Right ventricle myocardium inferior (tissue), 1 donor: ENCODE measurements at regions of chr4 and their contacts with region 1.

Region 1: GRCh38 chr4:16573744-16574143 is 324.7 kb downstream of the LDB2 start:
- DNase-seq: no peak
- ATAC-seq: peak; percentile 92

Region 2: DNA sequence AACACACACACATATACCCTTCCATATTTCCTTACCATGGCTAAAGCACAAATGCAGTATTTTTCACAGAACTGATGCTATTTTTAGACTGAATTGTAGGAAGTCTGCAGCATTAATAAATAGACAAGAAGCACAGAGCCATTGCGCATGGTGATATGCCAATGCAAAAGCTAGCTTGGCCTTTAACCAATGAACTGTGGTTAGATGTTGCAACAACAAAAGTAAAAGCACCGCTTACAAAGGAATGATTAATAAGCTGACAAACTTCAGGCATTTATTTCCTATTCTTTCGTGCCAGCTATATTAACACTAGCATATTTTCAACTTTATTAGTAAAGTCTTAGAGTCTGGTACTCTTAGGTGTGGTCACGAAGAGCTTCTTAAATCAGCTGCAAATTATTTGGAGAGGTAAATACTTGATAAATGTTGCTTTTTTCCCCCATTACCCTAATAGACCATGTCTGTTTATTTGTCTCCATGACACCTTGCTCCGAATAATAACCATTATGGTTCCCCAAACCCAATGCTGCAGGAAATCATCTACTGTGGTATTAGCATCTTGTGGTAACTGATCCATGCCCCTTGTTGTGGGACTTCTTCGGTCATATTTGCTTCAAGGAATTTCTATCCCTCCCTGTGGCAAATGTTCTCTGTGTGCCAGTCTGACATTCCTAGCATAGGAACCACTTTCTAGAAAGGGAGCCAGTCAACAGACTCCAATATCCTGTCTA is 41.3 kb before region 1 on chr4:
- intact Hi-C with region 1: loop called (anchors 5 kb)
- DNase-seq: no peak
- ATAC-seq: peak; percentile 68

Region 3: GRCh38 chr4:16858275-16858752 is 284.6 kb after region 1 on chr4:
- intact Hi-C with region 1: no loop called
- DNase-seq: no peak
- ATAC-seq: peak; percentile 16